Activated B cell treated with CpG ODN at 0.5 μM for 24 hours (primary cell): ENCODE measurements at regions of chr4 and their contacts with region 1.

Region 1: GRCh38 chr4:48127682-48128394 is 6.2 kb downstream of the TXK start:
- DNase-seq: peak; percentile 19
- ATAC-seq: peak; percentile 74
- H3K4me3 Mint-ChIP-seq: peak overlapping the region; percentile 2
- H3K27ac Mint-ChIP-seq: no peak overlapping the region
- H3K4me1 Mint-ChIP-seq: peaks cover 10% of the 10 kb centered on the region
- H3K27me3 Mint-ChIP-seq: no peaks in the 10 kb centered on the region
- CTCF ChIP-seq: no peak

Region 2: GRCh38 chr4:48162162-48162561 is 34.3 kb after region 1 on chr4:
- CTCF ChIA-PET with region 1: no interaction called
- POLR2A ChIA-PET with region 1: no interaction called
- intact Hi-C with region 1: no loop called
- DNase-seq: no peak
- ATAC-seq: no peak
- H3K4me3 Mint-ChIP-seq: no peak overlapping the region
- H3K27ac Mint-ChIP-seq: no peak overlapping the region
- H3K4me1 Mint-ChIP-seq: no peaks in the 10 kb centered on the region
- H3K27me3 Mint-ChIP-seq: no peaks in the 10 kb centered on the region
- CTCF ChIP-seq: no peak

Region 3: GRCh38 chr4:48275247-48275646 is 147.4 kb after region 1 on chr4:
- CTCF ChIA-PET with region 1: interaction called, 23 read pairs
- POLR2A ChIA-PET with region 1: no interaction called
- intact Hi-C with region 1: loop called (anchors 1 kb)
- DNase-seq: no peak
- ATAC-seq: peak; percentile 45
- H3K4me3 Mint-ChIP-seq: no peak overlapping the region
- H3K27ac Mint-ChIP-seq: no peak overlapping the region
- H3K4me1 Mint-ChIP-seq: peaks cover 15% of the 10 kb centered on the region
- H3K27me3 Mint-ChIP-seq: no peaks in the 10 kb centered on the region
- CTCF ChIP-seq: no peak

Region 4: DNA sequence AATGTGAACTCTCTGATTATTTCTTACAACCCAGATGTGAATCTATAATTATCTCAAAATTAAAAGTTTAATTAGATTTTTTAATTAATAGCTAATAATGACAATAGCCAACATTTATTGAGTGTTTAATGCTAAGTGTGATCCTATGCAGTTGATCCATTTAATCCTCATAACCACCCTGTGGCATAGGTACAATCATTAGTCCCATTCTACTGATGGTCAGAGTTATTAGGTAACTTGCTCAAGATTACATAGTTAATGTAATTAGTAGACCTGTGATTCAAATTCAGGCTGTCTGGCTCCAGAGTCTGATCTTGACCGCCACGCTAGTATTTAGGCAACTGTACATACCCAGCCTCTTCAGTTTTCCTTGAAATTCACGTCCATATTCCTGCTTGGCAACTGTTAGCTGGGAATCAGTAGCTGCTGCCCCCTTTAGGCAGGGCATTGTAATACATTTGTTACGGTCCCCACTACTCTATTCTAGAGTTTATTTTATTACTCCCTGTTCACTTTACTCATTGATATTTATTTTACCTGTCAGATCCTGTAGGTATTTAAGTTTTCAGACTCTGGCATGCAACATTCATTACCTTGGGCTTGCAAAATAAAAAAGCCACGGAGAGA is 162.4 kb after region 1 on chr4:
- CTCF ChIA-PET with region 1: interaction called, 17 read pairs
- POLR2A ChIA-PET with region 1: no interaction called
- intact Hi-C with region 1: loop called (anchors 1 kb)
- DNase-seq: no peak
- ATAC-seq: peak; percentile 40
- H3K4me3 Mint-ChIP-seq: no peak overlapping the region
- H3K27ac Mint-ChIP-seq: no peak overlapping the region
- H3K4me1 Mint-ChIP-seq: no peaks in the 10 kb centered on the region
- H3K27me3 Mint-ChIP-seq: no peaks in the 10 kb centered on the region
- CTCF ChIP-seq: no peak

Region 5: DNA sequence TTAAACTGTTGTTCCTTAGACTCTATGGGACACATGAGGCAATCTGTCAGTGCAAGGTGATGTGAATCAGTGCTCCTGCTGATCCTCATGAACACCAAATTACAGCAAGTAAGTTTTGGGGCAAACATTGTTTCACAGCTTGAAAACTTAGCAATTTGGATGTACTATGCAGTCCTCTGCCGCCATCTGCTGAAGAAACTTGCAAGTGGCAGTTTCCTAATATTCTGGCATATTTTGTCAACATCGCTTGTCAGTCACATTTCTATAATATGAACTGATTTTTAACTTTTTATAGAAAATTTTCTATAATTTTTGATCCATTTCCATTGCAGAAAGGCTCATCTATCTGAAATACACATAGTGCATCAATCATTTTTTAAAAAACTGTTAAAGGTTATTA is 418.5 kb after region 1 on chr4:
- CTCF ChIA-PET with region 1: no interaction called
- POLR2A ChIA-PET with region 1: no interaction called
- intact Hi-C with region 1: loop called (anchors 1 kb)
- DNase-seq: no peak
- ATAC-seq: no peak
- H3K4me3 Mint-ChIP-seq: no peak overlapping the region
- H3K27ac Mint-ChIP-seq: no peak overlapping the region
- H3K4me1 Mint-ChIP-seq: no peaks in the 10 kb centered on the region
- H3K27me3 Mint-ChIP-seq: no peaks in the 10 kb centered on the region
- CTCF ChIP-seq: no peak